ENCODE measurements at regions of chr1 and their contacts with region 1.

Region 1: DNA sequence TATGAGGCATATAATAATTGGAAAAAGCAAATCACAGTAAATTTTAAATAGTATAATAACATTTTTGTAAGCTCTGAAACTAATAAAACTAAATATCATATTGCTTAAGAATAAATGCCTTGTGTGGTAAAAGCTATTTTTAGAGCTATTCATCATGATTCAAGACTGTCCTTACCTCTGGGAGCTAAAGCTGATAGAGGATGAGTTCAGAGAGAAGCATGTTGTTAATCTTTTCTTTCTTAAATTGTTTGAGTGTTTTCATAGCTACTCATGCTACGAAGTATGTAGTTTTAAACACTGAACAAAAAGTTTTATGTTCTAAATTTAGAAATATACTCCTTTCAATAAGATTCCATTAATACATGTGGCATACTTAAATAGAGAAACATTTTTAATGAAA is 30.5 kb downstream of the IFI16 start:
- DNase-seq: peak; percentile 84
- ATAC-seq: peak; percentile 90
- H3K4me3 ChIP-seq: no peak overlapping the region
- H3K27ac ChIP-seq: no peak overlapping the region
- H3K4me1 ChIP-seq: peaks cover 4% of the 10 kb centered on the region; the same call in 1 of the 2 replicates
- H3K27me3 ChIP-seq: no peaks in the 10 kb centered on the region
- CTCF ChIP-seq: no peak
- POLR2A ChIP-seq: no peak
- RAD21 ChIP-seq: no peak

Region 2: DNA sequence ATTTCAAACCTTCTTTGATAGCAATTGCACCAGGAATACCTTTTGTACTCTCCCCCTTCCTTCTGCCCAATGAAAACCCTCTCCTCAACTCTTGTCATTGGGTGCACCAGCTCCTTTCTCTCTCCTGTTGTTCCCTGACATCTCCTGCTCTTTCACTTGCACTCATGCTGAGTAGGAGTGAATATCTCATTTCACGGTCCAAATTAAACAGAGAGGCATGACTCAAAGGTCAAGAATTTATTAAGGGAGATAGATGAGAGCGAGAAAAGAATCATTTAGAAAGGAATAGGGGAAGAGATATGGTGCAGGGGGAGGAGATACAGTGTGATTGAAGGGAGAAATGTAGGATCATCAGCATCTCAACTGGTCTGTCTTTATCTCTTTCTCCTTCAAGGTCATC is 14.2 kb after region 1 on chr1:
- CTCF ChIA-PET with region 1: no interaction called
- POLR2A ChIA-PET with region 1: no interaction called
- dilution Hi-C with region 1: no loop called
- in situ Hi-C with region 1: no loop called
- intact Hi-C with region 1: loop called (anchors 1 kb)
- DNase-seq: peak; percentile 25
- ATAC-seq: peak; percentile 79
- H3K4me3 ChIP-seq: no peak overlapping the region
- H3K27ac ChIP-seq: no peak overlapping the region
- H3K4me1 ChIP-seq: peaks cover 9% of the 10 kb centered on the region
- H3K27me3 ChIP-seq: no peaks in the 10 kb centered on the region
- CTCF ChIP-seq: no peak
- POLR2A ChIP-seq: no peak
- RAD21 ChIP-seq: no peak

Region 3: GRCh38 chr1:159250638-159251216 is 210.5 kb after region 1 on chr1:
- CTCF ChIA-PET with region 1: no interaction called
- POLR2A ChIA-PET with region 1: no interaction called
- dilution Hi-C with region 1: no loop called
- in situ Hi-C with region 1: no loop called
- intact Hi-C with region 1: no loop called
- DNase-seq: no peak
- ATAC-seq: no peak
- H3K4me3 ChIP-seq: no peak overlapping the region
- H3K27ac ChIP-seq: no peak overlapping the region
- H3K4me1 ChIP-seq: no peaks in the 10 kb centered on the region
- H3K27me3 ChIP-seq: no peaks in the 10 kb centered on the region
- CTCF ChIP-seq: no peak
- POLR2A ChIP-seq: no peak
- RAD21 ChIP-seq: no peak